AG04450 (cell line): ENCODE measurements at regions of chr16 and their contacts with region 1.

Region 1: DNA sequence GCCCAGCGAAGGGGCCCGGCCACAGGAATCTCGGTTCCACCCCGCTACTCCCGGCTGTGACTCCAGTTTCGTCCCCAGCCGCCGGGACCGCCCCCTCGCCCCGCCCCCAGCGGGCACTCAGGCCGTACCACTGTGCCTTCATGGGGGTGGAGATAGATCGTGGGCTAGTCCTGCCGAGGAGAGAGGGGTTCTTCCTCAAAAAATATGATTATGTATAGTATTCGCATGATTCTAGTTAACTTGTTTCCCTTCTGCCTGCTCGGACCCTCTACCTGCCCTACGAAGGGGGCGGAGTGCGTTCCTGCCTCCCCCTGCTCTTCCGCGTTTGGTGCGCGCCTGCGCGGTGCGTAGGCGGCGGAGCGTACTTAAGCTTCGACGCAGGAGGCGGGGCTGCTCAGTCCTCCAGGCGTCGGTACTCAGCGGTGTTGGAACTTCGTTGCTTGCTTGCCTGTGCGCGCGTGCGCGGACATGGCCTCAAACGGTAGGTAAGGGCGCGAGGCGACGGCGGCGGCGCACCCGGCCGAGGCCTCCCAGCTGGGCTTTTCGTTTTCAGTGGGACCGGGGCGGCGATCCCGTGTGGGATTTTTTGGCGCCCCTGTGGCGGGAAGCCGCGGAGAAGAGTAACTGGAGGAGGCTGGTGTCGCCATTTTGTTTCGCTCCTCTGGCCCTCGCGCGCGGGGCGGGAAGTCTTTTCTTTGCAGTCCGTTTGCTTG is at the start of gene FUS:
- DNase-seq: peak; percentile 85
- H3K4me3 ChIP-seq: peak within 1 kb of the TSS; percentile 95
- H3K27ac ChIP-seq: peak within 1 kb of the TSS; percentile 91
- H3K27me3 ChIP-seq: no peaks in the 10 kb centered on the region
- CTCF ChIP-seq: no peak
- polyA plus RNA-seq, gene FUS: 156 and 166 TPM in 2 replicates

Region 2: DNA sequence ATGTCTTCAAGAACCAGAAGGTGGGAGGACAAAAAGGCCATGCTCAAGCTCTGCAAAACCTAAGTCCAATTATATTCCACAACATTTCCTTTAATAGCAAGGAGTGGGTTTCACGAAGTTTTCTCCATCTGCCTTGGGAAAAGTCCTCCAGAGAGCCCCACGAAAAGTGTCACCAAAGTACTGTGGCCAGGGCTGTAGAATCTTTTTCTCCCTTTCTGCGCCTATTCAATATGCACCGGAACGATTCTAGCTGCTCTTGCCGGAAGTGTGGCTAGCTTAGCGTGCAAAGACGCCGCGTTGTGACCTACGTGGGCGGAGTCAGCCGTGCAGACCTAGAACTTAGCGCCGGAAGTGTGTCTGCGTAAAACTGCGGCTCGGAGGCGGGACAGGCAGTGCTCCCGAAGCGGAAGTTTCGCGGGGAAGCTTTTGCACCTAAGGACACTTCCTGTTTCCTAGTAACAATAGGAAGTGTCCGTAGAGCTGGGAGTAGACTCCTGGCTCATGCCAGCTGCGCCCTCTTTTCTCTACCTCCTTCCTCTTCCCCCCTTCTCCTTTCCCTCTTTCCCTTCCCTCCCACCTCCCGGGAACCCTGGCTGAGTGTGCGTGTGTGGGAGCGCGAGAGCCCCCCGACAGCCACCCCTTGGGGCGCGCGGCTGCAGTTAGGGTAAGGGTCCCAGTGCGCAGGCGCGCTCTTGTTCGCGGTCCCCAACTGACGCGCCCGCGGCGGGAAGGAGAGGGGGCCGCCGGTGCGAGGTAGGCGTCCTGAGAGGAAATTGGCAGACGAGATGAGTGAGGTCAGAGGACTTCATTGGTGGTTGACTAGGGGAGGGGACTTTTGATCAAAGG is 105.7 kb before region 1 on chr16 and contains the starts of genes ZNF646 and ZNF668:
- CTCF ChIA-PET with region 1: no interaction called
- POLR2A ChIA-PET with region 1: interaction called, 16 read pairs
- DNase-seq: peak; percentile 98
- H3K4me3 ChIP-seq: peak within 1 kb of the TSS; percentile 99
- H3K27ac ChIP-seq: peak within 1 kb of the TSS; percentile 96
- H3K27me3 ChIP-seq: no peaks in the 10 kb centered on the region
- CTCF ChIP-seq: 0 out of 2 replicates have a peak, but pooled peaks have one; percentile 1
- polyA plus RNA-seq, gene ZNF646: 2.4 and 4.5 TPM in 2 replicates
- polyA plus RNA-seq, gene ZNF668: 5.9 and 8.6 TPM in 2 replicates

Region 3: DNA sequence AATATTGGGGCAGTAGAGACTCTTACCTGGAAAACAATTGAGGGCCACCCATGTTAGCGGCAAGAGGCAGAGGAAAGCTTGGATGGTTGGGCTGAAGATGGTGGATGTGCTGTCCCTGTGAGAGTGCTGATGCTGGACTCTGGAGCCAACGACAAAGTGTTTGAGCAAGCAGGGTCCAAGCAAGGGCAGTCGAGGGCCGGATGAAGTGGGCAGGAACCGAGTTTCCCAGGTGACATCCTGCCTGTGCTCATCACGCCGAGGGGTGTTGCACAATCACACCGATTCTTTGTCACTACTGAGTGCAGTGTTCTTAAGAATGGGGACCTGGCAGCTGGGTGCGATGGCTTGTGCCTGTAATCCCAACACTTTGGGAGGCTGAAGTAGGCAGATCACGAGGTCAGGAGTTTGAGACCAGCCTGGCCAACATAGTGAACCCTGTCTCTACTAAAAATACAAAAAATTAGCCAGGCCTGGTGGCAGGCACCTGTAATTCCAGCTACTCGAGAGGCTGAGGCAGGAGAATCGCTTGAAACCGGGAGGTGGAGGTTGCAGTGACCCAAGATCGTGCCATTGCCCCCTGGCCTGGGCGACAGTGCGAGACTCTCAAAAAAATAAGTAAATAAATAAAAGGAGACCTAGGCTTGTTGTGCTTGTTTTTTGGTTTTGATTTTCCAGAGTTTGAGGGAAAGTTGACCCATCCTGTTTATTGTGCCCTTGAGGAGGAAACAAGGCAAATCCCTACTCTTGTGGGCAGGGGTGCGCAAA is 16.6 kb after region 1 on chr16:
- CTCF ChIA-PET with region 1: no interaction called
- POLR2A ChIA-PET with region 1: interaction called, 43 read pairs
- DNase-seq: no peak
- H3K4me3 ChIP-seq: no peak overlapping the region
- H3K27ac ChIP-seq: no peak overlapping the region
- H3K27me3 ChIP-seq: no peaks in the 10 kb centered on the region
- CTCF ChIP-seq: no peak

Region 4: DNA sequence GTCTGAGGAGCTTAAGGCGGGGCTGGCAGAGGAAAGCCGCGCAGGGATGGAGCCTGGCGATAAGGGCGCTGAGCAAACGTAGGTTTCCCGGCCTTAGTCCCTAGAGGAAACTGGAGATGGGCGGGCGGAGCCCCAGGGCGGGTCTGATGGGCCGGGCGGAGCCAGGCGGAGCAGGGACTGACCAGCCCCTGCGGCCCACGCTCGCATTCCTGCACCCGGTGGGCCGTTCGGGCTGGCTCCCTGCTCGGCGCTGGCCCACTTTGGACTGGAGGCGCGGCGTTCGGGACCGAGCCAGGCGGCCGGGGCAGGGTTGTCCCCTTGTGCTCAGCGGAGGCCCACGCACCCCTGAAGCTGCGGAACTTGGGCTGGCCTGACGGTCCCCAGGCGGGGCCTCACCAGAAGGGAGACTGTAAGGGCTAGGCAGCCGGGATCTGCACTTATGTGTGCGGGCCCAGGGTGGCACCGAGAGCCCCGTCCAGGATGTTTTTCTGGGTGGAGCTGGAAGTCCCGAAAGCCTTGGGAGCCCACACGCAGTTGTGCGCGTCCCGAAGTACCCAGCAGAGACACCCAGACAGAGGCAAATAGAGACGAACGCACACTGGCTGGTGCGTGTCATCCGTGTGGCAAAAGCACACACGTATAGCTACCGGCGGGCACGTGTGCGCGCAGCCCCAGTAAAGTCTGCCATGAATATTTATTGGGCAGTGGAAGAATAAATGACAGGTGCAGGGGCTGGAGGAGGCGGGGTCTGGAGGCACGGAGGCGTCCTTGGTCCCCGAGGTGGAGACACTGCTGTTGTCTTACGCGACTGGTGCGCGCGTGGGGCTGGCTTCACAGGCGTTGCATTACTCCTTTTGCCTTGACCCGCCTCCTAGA is 35.6 kb after region 1 on chr16:
- CTCF ChIA-PET with region 1: no interaction called
- POLR2A ChIA-PET with region 1: interaction called, 21 read pairs
- DNase-seq: no peak
- H3K4me3 ChIP-seq: peak overlapping the region; percentile 59
- H3K27ac ChIP-seq: no peak overlapping the region
- H3K27me3 ChIP-seq: peaks cover 50% of the 10 kb centered on the region
- CTCF ChIP-seq: no peak

Region 5: DNA sequence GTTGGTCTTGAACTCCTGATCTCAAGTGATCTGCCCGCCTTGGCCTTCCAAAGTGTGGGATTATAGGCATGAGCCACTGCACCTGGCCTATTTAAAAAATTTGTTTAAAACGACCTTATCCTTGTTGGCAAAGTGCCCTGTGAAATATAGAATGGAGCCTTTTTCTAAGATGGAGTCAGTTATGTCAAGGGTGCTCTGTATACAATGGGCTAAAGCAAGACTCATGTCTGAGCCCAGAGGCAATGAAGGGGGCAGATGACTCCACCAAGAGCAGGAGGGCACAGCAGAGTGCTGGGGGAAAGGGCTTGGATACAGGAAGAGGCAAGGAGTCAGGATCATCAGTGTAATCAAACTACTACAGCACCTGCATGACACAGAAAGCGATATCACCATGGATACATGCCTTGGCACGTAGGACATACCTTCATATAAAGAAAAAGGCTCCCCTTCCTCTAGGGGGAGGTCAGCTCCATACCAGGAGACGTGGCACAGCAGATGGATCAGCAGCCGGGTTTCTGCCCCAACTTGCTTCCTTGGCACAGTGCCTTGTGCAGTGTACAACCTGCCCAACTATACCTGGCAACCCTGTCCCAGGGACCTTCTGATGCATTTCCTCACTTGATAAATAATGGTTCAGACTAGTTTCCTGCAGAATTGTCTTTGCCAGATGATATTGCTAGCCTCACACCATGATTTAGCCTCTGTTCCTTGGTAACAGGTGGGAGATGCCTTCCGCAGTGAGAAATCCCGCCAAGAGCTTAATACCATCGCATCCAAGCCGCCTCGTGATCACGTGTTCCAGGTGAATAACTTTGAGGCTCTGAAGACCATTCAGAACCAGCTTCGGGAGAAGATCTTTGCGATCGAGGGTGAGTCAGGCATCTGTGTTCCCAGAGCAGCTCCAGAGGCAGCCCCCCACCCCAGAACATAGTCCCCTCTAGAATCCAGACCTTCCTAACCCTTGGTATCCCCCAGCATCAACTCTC is 95.2 kb after region 1 on chr16:
- CTCF ChIA-PET with region 1: no interaction called
- POLR2A ChIA-PET with region 1: no interaction called
- DNase-seq: no peak
- H3K4me3 ChIP-seq: no peak overlapping the region
- H3K27ac ChIP-seq: no peak overlapping the region
- H3K27me3 ChIP-seq: peaks cover 7% of the 10 kb centered on the region
- CTCF ChIP-seq: no peak

Region 6: DNA sequence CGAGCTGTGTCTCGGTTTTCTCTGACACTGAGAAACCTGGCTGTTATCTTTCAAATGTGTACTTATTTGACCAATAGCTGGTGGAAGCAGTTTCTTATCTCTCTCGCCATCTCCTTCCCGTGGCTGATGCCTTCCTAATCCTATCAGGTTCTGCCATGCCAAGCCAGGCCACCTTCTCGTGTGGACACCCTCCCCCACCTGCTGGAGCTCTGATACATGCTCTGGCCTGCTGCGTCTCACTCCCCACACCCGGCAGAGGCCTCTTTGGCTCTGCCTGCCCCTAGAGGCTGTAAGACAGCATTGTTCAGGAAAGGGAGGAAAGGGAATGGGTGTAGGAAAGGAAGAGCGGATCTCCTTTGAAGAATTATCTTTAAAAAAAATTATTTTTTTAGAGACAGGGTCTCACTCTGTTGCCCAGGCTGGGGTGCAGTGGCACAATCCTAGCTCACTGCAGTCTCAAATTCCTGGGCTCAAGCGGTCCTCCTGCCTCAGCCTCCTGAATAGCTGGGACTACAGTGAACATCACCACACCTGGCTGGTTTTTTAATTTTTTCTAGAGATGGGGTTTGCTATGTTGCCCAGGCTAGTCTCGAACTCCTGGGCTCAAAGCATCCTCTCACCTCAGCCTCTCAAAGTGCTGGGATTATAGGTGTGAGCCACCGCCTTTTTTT is 271.9 kb after region 1 on chr16:
- CTCF ChIA-PET with region 1: no interaction called
- POLR2A ChIA-PET with region 1: interaction called, 22 read pairs
- DNase-seq: peak; percentile 63
- H3K4me3 ChIP-seq: no peak overlapping the region
- H3K27ac ChIP-seq: peak overlapping the region; percentile 96
- H3K27me3 ChIP-seq: no peaks in the 10 kb centered on the region
- CTCF ChIP-seq: peak; percentile 86